MCF 10A (cell line): ENCODE measurements at regions of chr5 and their contacts with region 1.

Region 1: GRCh38 chr5:160439205-160439600 is 17.5 kb downstream of the PTTG1 start:
- DNase-seq: peak; percentile 84
- H3K4me3 Mint-ChIP-seq: peak overlapping the region; percentile 69
- H3K27ac Mint-ChIP-seq: no peak overlapping the region
- H3K4me1 Mint-ChIP-seq: peaks cover 10% of the 10 kb centered on the region
- H3K27me3 Mint-ChIP-seq: peaks cover 13% of the 10 kb centered on the region
- CTCF ChIP-seq: peak; percentile 91

Region 2: DNA sequence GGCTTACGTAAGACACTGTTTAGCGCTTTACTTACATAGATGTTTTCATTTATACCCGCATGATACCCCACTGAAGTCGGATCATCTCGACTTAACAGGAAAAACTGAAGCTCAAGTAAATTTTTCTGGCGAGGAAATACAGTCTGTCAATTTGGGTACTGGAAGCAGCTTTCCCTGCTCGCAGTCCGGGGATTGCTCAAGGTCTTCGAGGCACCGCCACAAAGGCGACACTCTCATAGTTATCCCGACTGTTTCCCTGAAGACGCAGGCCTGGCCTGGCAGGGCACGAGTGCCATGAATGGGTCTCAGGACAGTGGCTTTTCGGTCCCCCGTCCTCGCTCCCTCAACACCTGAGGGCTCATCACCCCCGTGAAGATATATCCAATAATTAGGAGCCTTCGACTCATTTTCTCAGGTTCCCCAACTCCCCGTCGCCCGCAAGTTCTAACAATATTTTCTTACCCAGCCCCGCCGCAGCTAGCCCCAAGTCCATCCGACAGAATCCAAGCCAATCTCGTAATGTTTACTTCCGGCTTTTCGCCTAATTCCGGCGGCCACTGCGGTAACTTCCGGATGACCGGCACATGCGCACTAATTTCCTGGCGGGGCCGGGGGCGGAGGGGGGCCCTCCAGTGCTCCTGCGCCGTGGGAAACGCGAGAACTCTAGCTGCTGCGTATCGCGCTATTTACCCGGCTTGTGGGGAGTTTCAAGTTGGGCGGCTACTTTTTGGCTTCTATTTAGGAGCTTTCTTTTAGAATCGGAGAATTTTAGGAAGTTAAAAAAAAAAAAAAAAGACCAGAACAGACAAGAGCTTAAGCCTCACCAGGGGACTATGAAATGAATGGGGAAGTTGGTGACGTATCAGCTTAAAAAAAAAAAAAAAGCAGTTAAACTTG is 20.4 kb before region 1 on chr5 and contains the start of gene SLU7:
- CTCF ChIA-PET with region 1: interaction called, 197 read pairs
- POLR2A ChIA-PET with region 1: interaction called, 43 read pairs
- intact Hi-C with region 1: no loop called
- DNase-seq: peak; percentile 98
- H3K4me3 Mint-ChIP-seq: peak within 1 kb of the TSS; percentile 99
- H3K27ac Mint-ChIP-seq: peak within 1 kb of the TSS; percentile 99
- H3K4me1 Mint-ChIP-seq: peaks cover 43% of the 10 kb centered on the region
- H3K27me3 Mint-ChIP-seq: no peaks in the 10 kb centered on the region
- CTCF ChIP-seq: no peak
- total RNA-seq, gene SLU7: 64.6 and 85.6 TPM in 2 replicates

Region 3: DNA sequence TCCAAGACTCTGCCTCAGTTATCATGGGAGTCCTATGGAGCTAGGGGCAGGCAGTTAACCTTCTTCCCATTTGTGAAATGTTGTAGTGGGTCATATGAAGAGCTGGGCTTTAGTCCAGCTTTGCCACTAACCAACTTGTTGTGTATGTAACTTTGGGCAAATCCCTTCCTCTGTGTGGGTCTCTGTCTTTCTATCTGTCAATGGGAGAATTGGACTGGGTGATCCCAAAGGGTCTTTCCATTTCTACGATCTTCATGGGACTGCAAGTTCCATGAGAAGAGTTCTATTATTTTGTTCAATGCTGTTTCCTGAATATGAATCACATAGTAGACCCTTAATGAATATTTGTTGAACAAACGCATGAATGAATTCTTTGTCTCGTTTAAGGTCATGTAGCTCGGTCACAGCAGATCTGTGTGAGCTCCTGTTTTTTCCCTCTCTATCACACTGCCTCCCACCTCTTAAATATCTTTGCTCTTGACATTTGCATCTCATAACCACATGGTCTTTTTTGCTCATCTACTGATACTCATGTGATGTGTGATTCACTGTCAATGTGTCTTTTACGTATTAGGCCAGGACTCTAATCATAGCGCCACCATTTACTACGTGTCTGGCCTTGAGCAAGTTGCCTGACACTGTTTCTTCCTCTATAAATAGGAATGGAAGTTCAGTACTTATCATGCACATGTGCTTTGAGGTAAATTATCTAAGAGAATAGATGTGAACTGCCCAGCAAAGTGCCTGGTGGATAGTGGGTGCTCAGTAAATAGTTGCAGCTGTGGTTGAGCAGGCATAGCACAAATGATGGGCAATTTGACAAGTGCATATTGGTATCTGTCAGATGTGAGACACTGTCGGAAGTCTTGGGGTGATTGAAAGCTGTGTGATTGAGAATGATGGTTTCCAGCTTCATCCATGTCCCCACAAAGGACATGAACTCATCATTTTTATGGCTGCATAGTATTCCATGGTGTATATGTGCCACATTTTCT is 19.9 kb after region 1 on chr5:
- CTCF ChIA-PET with region 1: interaction called, 52 read pairs
- POLR2A ChIA-PET with region 1: interaction called, 3 read pairs
- intact Hi-C with region 1: no loop called
- DNase-seq: no peak
- H3K4me3 Mint-ChIP-seq: no peak overlapping the region
- H3K27ac Mint-ChIP-seq: no peak overlapping the region
- H3K4me1 Mint-ChIP-seq: peaks cover 9% of the 10 kb centered on the region
- H3K27me3 Mint-ChIP-seq: no peaks in the 10 kb centered on the region
- CTCF ChIP-seq: no peak

Region 4: DNA sequence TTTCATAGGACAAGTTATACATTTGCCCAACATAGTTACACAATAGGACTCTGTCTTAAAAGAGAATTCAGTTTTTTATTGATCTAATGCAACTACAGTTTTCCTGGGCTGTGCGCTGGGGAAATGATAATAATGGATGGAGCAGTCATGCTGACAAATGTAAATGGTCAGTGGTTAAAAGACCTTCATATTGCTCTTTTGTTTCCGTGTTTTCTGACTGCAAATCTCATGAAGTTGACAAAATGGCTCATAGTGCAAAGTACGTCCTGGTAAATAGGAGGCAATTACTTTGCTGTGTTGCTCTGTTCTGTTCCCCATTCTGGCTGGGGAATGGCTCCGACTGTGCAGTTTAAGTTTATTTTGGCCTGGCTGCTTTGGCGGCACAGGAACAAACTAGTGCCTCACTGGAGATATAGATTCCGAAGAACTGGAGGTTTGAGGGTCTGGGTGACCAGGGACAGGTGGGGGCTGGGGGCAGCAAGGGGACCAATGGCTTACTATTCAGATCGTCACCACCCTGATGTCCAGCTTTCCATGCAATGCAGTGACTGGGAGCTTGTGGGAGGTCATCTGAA is 36.7 kb after region 1 on chr5:
- CTCF ChIA-PET with region 1: interaction called, 15 read pairs
- POLR2A ChIA-PET with region 1: no interaction called
- intact Hi-C with region 1: no loop called
- DNase-seq: no peak
- H3K4me3 Mint-ChIP-seq: no peak overlapping the region
- H3K27ac Mint-ChIP-seq: no peak overlapping the region
- H3K4me1 Mint-ChIP-seq: peaks cover 10% of the 10 kb centered on the region
- H3K27me3 Mint-ChIP-seq: no peaks in the 10 kb centered on the region
- CTCF ChIP-seq: no peak

Region 5: DNA sequence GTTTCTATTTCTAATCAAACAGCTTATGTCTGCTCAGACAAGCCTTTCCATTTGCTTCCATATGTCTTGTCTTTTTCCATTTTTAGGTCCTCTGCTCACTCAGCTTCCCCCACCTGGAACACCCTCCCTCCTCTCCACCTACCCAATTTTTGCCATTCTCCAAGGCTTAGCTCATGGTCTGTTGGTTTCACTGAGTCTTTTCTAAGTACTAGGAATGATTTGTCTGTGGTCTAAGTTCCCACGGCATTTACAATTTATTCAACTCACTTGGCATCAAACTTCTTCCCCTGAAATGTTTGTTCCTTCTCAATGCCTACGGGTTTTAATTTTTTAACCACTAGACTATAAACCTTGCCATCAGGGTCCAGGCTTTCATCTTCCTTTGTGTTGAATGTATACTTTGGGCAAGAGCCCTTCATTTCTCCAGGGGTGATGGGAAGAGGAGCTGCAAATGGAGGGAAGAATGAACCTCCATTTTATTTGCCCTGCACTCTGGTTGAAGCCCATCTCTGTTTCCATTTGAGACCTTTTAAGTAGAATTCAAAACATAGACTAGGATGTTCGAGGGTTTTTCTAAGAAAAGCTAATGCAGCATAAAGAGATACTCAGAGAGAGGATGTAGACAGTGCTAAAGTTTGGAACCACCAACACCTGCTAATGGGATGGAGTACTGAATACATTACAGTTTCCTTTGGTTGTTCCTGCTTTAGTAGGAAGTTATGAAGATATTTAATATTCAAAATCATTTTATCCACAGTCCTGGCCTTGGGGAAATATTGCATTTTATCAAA is 86.5 kb after region 1 on chr5:
- CTCF ChIA-PET with region 1: interaction called, 10 read pairs
- POLR2A ChIA-PET with region 1: no interaction called
- intact Hi-C with region 1: no loop called
- DNase-seq: no peak
- H3K4me3 Mint-ChIP-seq: no peak overlapping the region
- H3K27ac Mint-ChIP-seq: no peak overlapping the region
- H3K4me1 Mint-ChIP-seq: peaks cover 7% of the 10 kb centered on the region
- H3K27me3 Mint-ChIP-seq: peaks cover 11% of the 10 kb centered on the region
- CTCF ChIP-seq: no peak

Region 6: DNA sequence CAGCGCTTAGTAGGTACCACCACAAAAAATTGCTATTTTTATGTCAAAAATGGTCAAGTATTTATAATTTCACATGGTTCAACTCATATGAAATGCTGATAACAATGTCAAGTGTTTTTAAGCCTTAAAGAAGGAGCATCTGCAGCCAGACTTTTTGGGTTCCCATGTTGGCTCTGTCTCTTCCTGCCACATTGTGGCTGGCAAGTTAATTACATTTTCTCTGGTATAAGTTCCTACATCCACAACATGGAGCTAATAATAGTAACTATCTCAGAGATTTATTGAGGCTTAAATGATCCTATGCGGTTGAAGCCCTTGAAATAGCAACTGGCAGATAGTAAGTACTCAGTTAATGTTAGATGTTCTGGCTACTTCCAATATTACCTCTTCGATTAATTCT is 407.4 kb after region 1 on chr5:
- CTCF ChIA-PET with region 1: interaction called, 5 read pairs
- POLR2A ChIA-PET with region 1: no interaction called
- intact Hi-C with region 1: loop called (anchors 2 kb)
- DNase-seq: no peak
- H3K4me3 Mint-ChIP-seq: no peak overlapping the region
- H3K27ac Mint-ChIP-seq: no peak overlapping the region
- H3K4me1 Mint-ChIP-seq: no peaks in the 10 kb centered on the region
- H3K27me3 Mint-ChIP-seq: no peaks in the 10 kb centered on the region
- CTCF ChIP-seq: no peak

Region 7: DNA sequence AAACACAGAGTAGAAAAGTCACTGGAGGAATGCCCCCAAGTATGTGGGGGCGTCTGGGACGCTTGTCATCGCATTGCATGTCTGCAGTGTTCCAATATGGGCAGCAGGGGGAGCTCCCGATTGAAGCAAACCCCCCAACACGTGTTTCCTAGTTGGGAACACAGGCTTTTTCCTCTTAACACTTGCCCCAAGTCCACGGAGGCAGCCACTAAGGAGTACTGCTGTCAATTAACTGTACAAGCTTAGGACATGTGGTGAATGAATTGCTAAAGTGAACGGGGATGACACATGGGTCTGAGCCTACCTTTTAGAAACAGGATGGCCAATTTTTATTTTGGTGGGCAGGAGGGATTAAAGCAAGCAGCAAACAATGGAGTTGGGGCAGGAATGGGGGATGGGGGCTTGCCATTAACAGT is 1105.2 kb after region 1 on chr5:
- CTCF ChIA-PET with region 1: interaction called, 4 read pairs
- POLR2A ChIA-PET with region 1: no interaction called
- intact Hi-C with region 1: loop called (anchors 10 kb)
- DNase-seq: peak; percentile 72
- H3K4me3 Mint-ChIP-seq: no peak overlapping the region
- H3K27ac Mint-ChIP-seq: no peak overlapping the region
- H3K4me1 Mint-ChIP-seq: peaks cover 11% of the 10 kb centered on the region
- H3K27me3 Mint-ChIP-seq: peaks cover 93% of the 10 kb centered on the region
- CTCF ChIP-seq: peak; percentile 97